ENCODE measurements at regions of chr12 and their contacts with region 1.

Region 1: DNA sequence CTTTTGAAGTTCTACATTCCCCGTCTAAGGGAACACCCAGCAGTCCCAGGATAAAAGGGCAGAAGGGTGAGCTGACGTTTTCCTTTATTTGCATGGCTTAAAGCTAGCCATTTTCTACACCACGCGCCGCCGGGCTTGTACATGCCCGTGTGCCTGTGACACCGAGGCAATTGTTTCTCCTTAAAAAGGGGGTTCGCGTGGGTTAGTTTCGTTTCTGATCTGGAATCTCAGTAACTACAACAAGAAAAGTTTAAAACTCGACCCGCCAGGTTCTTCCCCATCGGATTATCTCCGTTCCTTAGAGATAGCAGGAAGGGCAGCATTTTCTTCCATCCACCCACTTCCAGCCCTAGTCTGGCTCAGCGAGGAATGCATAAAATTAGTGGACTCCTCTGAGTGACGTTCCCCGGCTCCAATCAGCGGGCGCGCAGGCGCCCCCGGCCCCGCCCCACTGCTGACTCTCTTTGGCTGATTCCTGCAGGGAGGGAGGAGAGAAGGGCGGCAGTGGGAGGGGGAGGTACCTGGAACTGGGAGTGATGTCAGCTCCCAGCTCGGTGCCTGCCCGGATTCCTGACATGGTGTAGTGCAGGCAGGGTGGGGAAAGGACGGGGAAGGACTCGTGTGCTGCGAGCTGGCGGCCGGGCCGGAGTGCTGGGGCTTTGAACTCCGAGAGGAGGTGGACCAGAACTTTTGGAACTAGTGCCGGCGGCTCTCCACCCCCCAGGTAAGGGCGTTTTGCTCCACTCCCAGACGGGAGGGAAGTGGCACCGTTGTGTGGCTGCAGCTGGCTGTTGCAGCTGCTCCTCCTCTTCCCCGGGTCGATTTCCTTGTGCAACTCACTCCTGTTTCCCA is at the start of gene PPFIBP1:
- DNase-seq: peak; percentile 95
- ATAC-seq: peak; percentile 96
- H3K4me3 ChIP-seq: peak within 1 kb of the TSS; percentile 61 to 86
- H3K27ac ChIP-seq: peak within 1 kb of the TSS; percentile 83
- H3K4me1 ChIP-seq: peaks cover 9 to 25% of the 10 kb centered on the region in 2 experiments
- H3K27me3 ChIP-seq: no peaks in the 10 kb centered on the region
- CTCF ChIP-seq: peak in 1 of 3 experiments; percentile 34; a peak in 1 of 6 replicates
- POLR2A ChIP-seq: peak; percentile 65
- RAD21 ChIP-seq: peak; percentile 43
- total RNA-seq, gene PPFIBP1: 102 TPM

Region 2: GRCh38 chr12:27549801-27550652 is 26.2 kb after region 1 on chr12:
- CTCF ChIA-PET with region 1: no interaction called
- POLR2A ChIA-PET with region 1: interaction called, 10 read pairs
- RAD21 ChIA-PET with region 1: interaction called in 1 of 2 experiments, 4 read pairs
- intact Hi-C with region 1: loop called (anchors 2 kb)
- DNase-seq: peak; percentile 94
- ATAC-seq: peak; percentile 89
- H3K4me3 ChIP-seq: peak overlapping the region; percentile 25 to 48
- H3K27ac ChIP-seq: peak overlapping the region; percentile 82
- H3K4me1 ChIP-seq: peaks cover 81 to 96% of the 10 kb centered on the region in 2 experiments
- H3K27me3 ChIP-seq: no peaks in the 10 kb centered on the region
- CTCF ChIP-seq: no peak
- POLR2A ChIP-seq: no peak
- RAD21 ChIP-seq: peak; percentile 25; the same call in 1 of the 2 replicates

Region 3: DNA sequence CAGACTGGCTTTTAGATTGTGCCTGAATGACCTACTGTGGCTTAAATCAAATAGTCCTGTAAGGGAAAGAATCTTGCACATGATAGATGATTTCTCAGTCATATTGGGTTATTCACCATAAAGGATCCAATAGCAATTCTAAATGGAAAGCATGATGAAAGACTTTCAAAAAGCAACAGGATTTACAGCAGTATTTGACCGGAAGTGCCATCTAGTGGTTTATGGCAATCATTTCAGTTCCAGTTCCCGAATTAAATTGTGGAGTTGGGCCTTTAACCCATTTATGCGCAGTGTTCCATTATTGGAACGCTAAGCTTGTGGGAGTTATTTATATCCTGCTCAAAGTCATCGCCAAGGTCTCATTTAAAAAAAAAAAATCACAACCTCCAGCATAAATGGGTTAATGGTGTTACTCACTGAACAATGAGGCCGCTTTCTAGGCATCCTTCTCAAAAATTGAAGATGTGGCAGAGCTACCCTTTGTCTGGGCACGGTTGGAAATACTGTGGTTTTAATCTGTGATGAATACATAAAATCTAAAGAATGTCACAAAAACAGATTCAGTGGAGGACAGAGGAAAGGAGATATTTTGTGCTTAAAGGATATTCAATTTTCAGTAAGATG is 111.6 kb after region 1 on chr12:
- CTCF ChIA-PET with region 1: no interaction called
- POLR2A ChIA-PET with region 1: interaction called, 3 read pairs
- RAD21 ChIA-PET with region 1: no interaction called
- intact Hi-C with region 1: loop called (anchors 2 kb)
- DNase-seq: peak; percentile 44
- ATAC-seq: no peak
- H3K4me3 ChIP-seq: no peak overlapping the region
- H3K27ac ChIP-seq: no peak overlapping the region
- H3K4me1 ChIP-seq: peaks cover 3 to 7% of the 10 kb centered on the region in 2 experiments; a peak in 1 of 4 replicates
- H3K27me3 ChIP-seq: no peaks in the 10 kb centered on the region
- CTCF ChIP-seq: peak; percentile 57 to 76 (median 65)
- POLR2A ChIP-seq: no peak
- RAD21 ChIP-seq: peak; percentile 85

Region 4: DNA sequence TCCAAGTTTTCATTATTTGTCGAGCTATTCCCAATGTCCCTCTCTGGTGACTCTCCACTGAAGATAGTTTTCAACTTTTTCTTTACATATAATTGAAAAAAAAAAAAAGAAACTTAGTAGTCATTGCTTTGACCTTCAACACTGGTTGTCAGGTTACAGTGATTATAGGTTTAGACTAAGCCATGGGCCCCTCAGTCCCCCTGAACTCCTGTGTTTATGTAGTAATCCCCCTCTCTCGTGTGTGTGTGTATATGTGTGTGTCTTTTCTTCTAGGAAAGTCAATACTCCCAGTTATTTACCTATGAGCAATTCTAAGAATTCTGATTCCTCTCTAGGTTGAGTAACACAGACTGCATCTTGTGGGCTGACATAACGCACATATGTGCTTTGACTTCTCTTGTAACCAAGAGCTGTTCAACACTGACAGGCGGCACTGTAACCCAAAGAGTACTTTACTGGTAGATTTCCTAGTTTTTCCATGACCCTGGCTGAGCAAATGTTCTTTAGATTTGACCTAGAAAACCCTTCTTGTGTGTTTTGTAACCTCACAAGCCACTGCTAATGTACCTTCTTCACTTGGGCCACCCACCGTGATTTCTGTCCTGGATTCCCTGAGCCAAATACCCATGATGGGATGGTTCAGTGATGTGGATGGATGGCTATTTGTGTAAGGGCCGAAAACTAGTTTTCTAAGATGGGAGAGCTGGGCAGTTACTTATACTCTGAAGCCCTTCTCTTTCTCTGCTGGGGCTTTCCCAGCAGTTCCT is 271.1 kb after region 1 on chr12:
- CTCF ChIA-PET with region 1: no interaction called
- POLR2A ChIA-PET with region 1: no interaction called
- RAD21 ChIA-PET with region 1: no interaction called
- intact Hi-C with region 1: no loop called
- DNase-seq: no peak
- ATAC-seq: no peak
- H3K4me3 ChIP-seq: no peak overlapping the region
- H3K27ac ChIP-seq: no peak overlapping the region
- H3K4me1 ChIP-seq: no peaks in the 10 kb centered on the region
- H3K27me3 ChIP-seq: no peaks in the 10 kb centered on the region
- CTCF ChIP-seq: no peak
- POLR2A ChIP-seq: no peak
- RAD21 ChIP-seq: no peak

Measured in HCT116 (cell line).